ENCODE measurements at regions of chr3 and their contacts with region 1.

Region 1: DNA sequence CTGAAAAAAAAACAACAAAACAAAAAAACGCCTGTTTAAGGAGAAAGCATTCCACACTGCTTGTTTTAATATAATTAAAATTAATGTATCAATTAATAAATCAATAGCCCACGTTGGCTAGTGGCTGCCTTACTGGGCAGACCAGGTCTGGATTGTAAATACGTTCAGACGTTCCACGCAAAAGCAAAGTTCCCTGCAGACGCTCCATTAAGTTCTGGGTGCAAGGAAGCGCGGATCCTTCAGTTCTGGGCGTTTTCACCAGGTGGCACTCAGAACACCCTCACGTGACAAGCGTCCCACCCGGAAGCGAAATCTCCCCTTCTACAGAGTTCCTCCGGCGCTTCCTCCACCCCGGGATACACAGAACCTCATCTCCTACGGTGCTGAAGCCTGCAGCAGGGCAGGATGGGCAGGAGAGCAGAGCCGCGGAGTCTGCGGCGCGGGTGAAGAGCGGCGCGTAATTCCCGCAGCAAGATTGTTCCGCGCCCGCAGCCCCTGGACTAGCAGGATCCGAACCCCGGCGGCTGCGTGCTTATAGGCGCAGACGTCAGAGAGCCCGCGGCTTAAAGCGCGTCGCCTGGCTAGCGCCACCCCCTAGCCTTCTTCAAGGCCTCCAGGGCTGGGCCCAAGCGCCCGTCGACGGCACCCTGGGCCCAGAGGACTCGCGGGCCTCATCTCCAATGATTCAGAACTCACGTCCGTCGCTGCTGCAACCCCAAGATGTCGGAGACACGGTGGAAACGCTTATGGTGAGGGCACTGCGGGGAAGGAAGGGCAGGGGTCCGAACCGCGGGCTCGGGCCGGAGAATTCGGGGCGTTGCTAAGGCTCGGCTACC is at the start of gene SLC25A38:
- DNase-seq: peak; percentile 84
- H3K4me3 Mint-ChIP-seq: peak within 1 kb of the TSS; percentile 89
- H3K27ac Mint-ChIP-seq: peak within 1 kb of the TSS; percentile 97
- H3K4me1 Mint-ChIP-seq: peaks cover 39% of the 10 kb centered on the region
- H3K27me3 Mint-ChIP-seq: no peaks in the 10 kb centered on the region
- total RNA-seq, gene SLC25A38: 20.9 to 21.0 TPM

Region 2: GRCh38 chr3:39051647-39052561 is 331.4 kb before region 1 on chr3 and contains the starts of genes SCN11A and WDR48:
- CTCF ChIA-PET with region 1: no interaction called
- intact Hi-C with region 1: loop called (anchors 1 kb)
- DNase-seq: peak; percentile 97
- H3K4me3 Mint-ChIP-seq: peak within 1 kb of the TSS; percentile 96
- H3K27ac Mint-ChIP-seq: peak within 1 kb of the TSS; percentile 98
- H3K4me1 Mint-ChIP-seq: peaks cover 50% of the 10 kb centered on the region
- H3K27me3 Mint-ChIP-seq: no peaks in the 10 kb centered on the region
- total RNA-seq, gene SCN11A: 0.05 TPM
- total RNA-seq, gene WDR48: 32.3 to 32.9 TPM

Region 3: DNA sequence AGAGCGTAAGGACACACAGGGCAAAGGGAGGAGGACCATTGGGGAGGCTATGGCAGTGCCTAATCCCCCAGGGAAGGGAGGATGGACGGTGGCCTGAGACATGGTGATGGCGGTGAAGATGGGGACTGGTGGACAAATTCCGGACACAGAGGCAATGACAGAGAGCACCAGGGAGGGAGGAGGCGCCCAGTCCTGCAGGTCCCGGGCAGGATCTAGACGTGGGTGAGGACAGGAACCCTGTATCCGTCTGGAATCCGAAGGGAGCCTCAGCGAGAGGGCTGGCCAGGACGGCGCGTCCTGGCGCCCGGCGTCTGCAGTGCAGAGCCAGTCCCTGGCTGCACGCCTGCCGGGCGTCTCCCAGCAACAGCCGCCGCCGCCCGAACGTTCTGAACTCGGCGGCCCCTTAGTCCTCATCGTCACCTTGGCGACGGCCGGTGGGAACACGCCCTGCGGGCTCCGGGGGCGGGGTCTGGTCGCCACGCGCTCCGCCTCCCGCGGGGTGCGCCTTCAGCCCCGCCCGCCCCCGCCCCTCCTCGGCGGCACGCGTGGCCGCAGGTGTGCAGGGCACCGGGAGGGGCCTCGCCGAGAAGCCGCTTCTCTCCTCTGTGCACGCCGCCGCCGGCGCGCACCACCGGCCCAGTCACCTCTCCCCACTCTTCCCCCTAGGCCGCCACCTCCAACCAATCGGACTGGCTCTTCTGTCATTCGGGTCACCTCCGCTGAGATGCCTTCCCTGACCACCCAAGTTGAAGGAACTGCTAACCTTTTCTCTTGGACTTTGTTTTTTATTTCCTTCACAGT is 202.5 kb before region 1 on chr3:
- CTCF ChIA-PET with region 1: no interaction called
- intact Hi-C with region 1: loop called (anchors 2 kb)
- DNase-seq: peak; percentile 89
- H3K4me3 Mint-ChIP-seq: peak overlapping the region; percentile 85
- H3K27ac Mint-ChIP-seq: peak overlapping the region; percentile 92
- H3K4me1 Mint-ChIP-seq: peaks cover 46% of the 10 kb centered on the region
- H3K27me3 Mint-ChIP-seq: no peaks in the 10 kb centered on the region

Region 4: GRCh38 chr3:39327746-39328349 is 55.4 kb before region 1 on chr3:
- CTCF ChIA-PET with region 1: interaction called, 6 read pairs
- intact Hi-C with region 1: loop called (anchors 1 kb)
- DNase-seq: peak; percentile 60
- H3K4me3 Mint-ChIP-seq: no peak overlapping the region
- H3K27ac Mint-ChIP-seq: no peak overlapping the region
- H3K4me1 Mint-ChIP-seq: peaks cover 30% of the 10 kb centered on the region
- H3K27me3 Mint-ChIP-seq: no peaks in the 10 kb centered on the region

Region 5: GRCh38 chr3:40309418-40309924 is 926.2 kb after region 1 on chr3 and contains the start of gene EIF1B:
- CTCF ChIA-PET with region 1: no interaction called
- intact Hi-C with region 1: loop called (anchors 1 kb)
- DNase-seq: peak; percentile 99
- H3K4me3 Mint-ChIP-seq: peak within 1 kb of the TSS; percentile 99
- H3K27ac Mint-ChIP-seq: peak within 1 kb of the TSS; percentile 98
- H3K4me1 Mint-ChIP-seq: peaks cover 24% of the 10 kb centered on the region
- H3K27me3 Mint-ChIP-seq: no peaks in the 10 kb centered on the region
- total RNA-seq, gene EIF1B: 47.0 to 49.2 TPM